Heart right ventricle (tissue), 16 donors: ENCODE measurements at regions of chr19 and their contacts with region 1.

Region 1: GRCh38 chr19:15264061-15264932 is 32.0 kb upstream of the EPHX3 start:
- DNase-seq: peak; percentile 75 to 76
- ATAC-seq: peak; percentile 9 to 52 (median 42)
- H3K4me3 ChIP-seq: no peak overlapping the region
- H3K27ac ChIP-seq: peak overlapping the region in 9 of 10 donors; percentile 41 to 81 (median 56)
- H3K4me1 ChIP-seq: peaks cover 27 to 64% (median 59%) of the 10 kb centered on the region in 9 donors
- H3K27me3 ChIP-seq: no peaks in the 10 kb centered on the region
- CTCF ChIP-seq: peak; percentile 51 to 85 (median 81)

Region 2: GRCh38 chr19:15177269-15178116 is 86.8 kb before region 1 on chr19:
- intact Hi-C with region 1: loop called in 1 of 10 experiments (anchors 5 kb)
- DNase-seq: peak; percentile 70 to 86
- ATAC-seq: peak; percentile 76 to 88 (median 83)
- H3K4me3 ChIP-seq: peak overlapping the region in 4 of 10 donors; percentile 14 to 39 (median 27)
- H3K27ac ChIP-seq: peak overlapping the region in 1 of 10 donors; percentile 40
- H3K4me1 ChIP-seq: peaks cover 0 to 13% (median 5%) of the 10 kb centered on the region in 9 donors
- H3K27me3 ChIP-seq: peaks cover 0 to 22% (median 7%) of the 10 kb centered on the region in 7 donors
- CTCF ChIP-seq: peak; percentile 90 to 99 (median 95)

Region 3: GRCh38 chr19:15323496-15324227 is 59.4 kb after region 1 on chr19:
- intact Hi-C with region 1: loop called in 2 of 10 experiments (anchors 5 to 10 kb)
- DNase-seq: peak; percentile 38 to 45
- ATAC-seq: peak; percentile 47 to 83 (median 68)
- H3K4me3 ChIP-seq: no peak overlapping the region
- H3K27ac ChIP-seq: peak overlapping the region in 7 of 10 donors; percentile 30 to 63 (median 52)
- H3K4me1 ChIP-seq: peaks cover 43 to 100% (median 95%) of the 10 kb centered on the region in 9 donors
- H3K27me3 ChIP-seq: no peaks in the 10 kb centered on the region
- CTCF ChIP-seq: no peak

Region 4: DNA sequence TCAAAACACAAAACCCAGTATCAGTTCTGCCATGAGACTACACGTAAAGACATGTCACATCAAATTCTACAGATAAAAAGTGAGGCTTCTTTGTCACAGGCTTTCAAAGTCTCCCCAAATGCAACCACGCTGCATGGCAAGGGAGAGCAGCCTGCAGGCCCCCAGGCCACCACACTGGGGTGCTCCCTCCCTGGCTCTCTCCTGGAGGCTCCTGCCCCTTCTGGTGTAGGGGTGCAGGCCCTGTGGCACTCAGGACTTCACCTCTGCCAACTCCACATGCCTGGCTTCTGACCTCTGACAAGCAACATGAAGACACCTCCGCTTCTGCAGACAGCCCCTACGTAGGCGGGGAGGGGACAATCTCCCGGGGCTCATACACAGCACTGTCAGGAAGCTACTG is 101.0 kb after region 1 on chr19:
- intact Hi-C with region 1: loop called in 2 of 10 experiments (anchors 5 to 10 kb)
- DNase-seq: no peak
- ATAC-seq: no peak
- H3K4me3 ChIP-seq: no peak overlapping the region
- H3K27ac ChIP-seq: no peak overlapping the region
- H3K4me1 ChIP-seq: peaks cover 0 to 29% (median 17%) of the 10 kb centered on the region in 9 donors
- H3K27me3 ChIP-seq: no peaks in the 10 kb centered on the region
- CTCF ChIP-seq: no peak

Region 5: DNA sequence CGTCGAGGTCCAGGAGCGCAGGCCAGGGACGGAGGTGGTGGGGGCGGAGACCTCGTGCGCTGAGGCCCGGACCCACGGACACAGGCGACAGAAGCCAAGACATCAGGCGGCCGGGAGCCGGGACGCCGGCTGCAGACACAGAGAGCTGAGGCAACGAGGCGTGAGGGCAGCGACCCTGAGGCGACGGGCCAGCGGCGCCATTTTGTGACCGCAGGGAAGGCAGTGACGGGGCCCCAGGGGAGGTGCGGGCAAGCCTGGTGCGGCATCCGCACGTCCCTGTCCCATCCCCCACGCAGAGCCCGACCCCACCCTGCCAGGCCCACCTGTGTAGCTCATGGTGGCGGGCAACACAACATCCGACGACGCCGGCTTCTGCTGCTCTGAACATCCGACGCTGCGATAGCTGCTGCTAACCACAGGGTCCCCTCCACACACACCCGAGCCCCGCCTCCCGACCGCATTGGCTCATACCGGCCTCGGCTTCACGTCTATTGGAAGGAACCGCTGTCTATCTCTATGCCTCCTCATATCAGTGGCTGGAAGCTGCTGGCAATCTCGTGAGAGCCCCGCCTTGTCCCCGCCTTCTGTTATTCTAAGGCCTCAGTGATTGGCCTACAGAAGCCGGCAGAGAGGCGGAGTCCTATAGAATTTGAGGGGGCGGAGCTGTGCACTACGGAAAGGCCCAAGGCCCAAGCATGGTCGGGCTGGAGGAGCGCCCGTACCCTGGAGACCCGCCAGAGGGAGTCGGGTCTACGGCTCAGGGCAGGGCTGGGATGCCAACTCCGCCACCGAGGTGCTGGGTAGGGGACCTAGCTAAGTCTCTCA is 154.5 kb after region 1 on chr19 and contains the start of gene AKAP8L:
- intact Hi-C with region 1: loop called in 1 of 10 experiments (anchors 5 kb)
- DNase-seq: peak; percentile 97 to 100
- ATAC-seq: peak; percentile 95 to 98 (median 97)
- H3K4me3 ChIP-seq: peak within 1 kb of the TSS; percentile 69 to 99 (median 92)
- H3K27ac ChIP-seq: peak within 1 kb of the TSS; percentile 42 to 93 (median 90)
- H3K4me1 ChIP-seq: peaks cover 4 to 70% (median 36%) of the 10 kb centered on the region in 9 donors
- H3K27me3 ChIP-seq: no peaks in the 10 kb centered on the region
- CTCF ChIP-seq: peak; percentile 35 to 84 (median 70)
- total RNA-seq, gene AKAP8L: 45.2 to 101 (median 63.1) TPM